ENCODE measurements at regions of chr3 and their contacts with region 1.

Region 1: GRCh38 chr3:45210308-45211041 is 15.6 kb downstream of the TMEM158 start:
- DNase-seq: peak; percentile 51 to 88 (median 81)
- ATAC-seq: peak; percentile 93
- H3K4me3 ChIP-seq: no peak overlapping the region
- H3K4me3 Mint-ChIP-seq: no peak overlapping the region
- H3K27ac ChIP-seq: no peak overlapping the region
- H3K27ac Mint-ChIP-seq: no peak overlapping the region
- H3K4me1 ChIP-seq: peaks cover 8% of the 10 kb centered on the region
- H3K4me1 Mint-ChIP-seq: peaks cover 9% of the 10 kb centered on the region
- H3K27me3 ChIP-seq: peaks cover 0 to 6% of the 10 kb centered on the region in 2 experiments
- H3K27me3 Mint-ChIP-seq: peaks cover 28% of the 10 kb centered on the region
- CTCF ChIP-seq: peak; percentile 56

Region 2: DNA sequence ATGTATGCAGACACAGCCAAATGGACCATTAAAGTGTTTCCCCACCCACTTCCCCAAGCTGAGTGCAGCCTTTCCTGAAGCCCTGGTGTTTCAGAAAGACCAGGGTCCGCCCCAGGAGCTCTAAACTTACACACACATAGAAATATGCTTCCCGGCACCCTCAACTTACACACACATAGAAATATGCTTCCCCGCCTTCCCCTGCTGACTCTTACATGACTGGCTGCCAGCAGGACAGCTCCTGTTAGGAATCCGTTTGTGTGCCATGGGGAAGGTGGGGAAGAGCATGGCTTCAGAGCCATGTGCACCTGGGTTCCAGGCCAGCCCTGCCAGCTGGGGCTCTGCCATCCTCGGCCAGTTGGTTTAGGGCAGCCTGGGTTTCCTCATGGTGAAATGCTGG is 180.8 kb before region 1 on chr3:
- CTCF ChIA-PET with region 1: interaction called, 597 read pairs
- POLR2A ChIA-PET with region 1: no interaction called
- intact Hi-C with region 1: no loop called
- DNase-seq: no peak
- ATAC-seq: no peak
- H3K4me3 ChIP-seq: no peak overlapping the region
- H3K4me3 Mint-ChIP-seq: no peak overlapping the region
- H3K27ac ChIP-seq: no peak overlapping the region
- H3K27ac Mint-ChIP-seq: no peak overlapping the region
- H3K4me1 ChIP-seq: peaks cover 3% of the 10 kb centered on the region
- H3K4me1 Mint-ChIP-seq: peaks cover 7% of the 10 kb centered on the region
- H3K27me3 ChIP-seq: no peaks in the 10 kb centered on the region
- H3K27me3 Mint-ChIP-seq: peaks cover 18% of the 10 kb centered on the region
- CTCF ChIP-seq: no peak

Region 3: GRCh38 chr3:45095916-45096526 is 114.5 kb before region 1 on chr3:
- CTCF ChIA-PET with region 1: interaction called, 12 read pairs
- POLR2A ChIA-PET with region 1: no interaction called
- intact Hi-C with region 1: no loop called
- DNase-seq: no peak
- ATAC-seq: no peak
- H3K4me3 ChIP-seq: no peak overlapping the region
- H3K4me3 Mint-ChIP-seq: no peak overlapping the region
- H3K27ac ChIP-seq: no peak overlapping the region
- H3K27ac Mint-ChIP-seq: no peak overlapping the region
- H3K4me1 ChIP-seq: no peaks in the 10 kb centered on the region
- H3K4me1 Mint-ChIP-seq: peaks cover 3% of the 10 kb centered on the region
- H3K27me3 ChIP-seq: peaks cover 0 to 3% of the 10 kb centered on the region in 2 experiments
- H3K27me3 Mint-ChIP-seq: peaks cover 48% of the 10 kb centered on the region
- CTCF ChIP-seq: no peak

Region 4: GRCh38 chr3:45178183-45179023 is 32.1 kb before region 1 on chr3:
- CTCF ChIA-PET with region 1: interaction called, 19 read pairs
- POLR2A ChIA-PET with region 1: no interaction called
- intact Hi-C with region 1: no loop called
- DNase-seq: no peak
- ATAC-seq: no peak
- H3K4me3 ChIP-seq: no peak overlapping the region
- H3K4me3 Mint-ChIP-seq: no peak overlapping the region
- H3K27ac ChIP-seq: no peak overlapping the region
- H3K27ac Mint-ChIP-seq: no peak overlapping the region
- H3K4me1 ChIP-seq: no peaks in the 10 kb centered on the region
- H3K4me1 Mint-ChIP-seq: no peaks in the 10 kb centered on the region
- H3K27me3 ChIP-seq: no peaks in the 10 kb centered on the region
- H3K27me3 Mint-ChIP-seq: peaks cover 12% of the 10 kb centered on the region
- CTCF ChIP-seq: no peak

Region 5: DNA sequence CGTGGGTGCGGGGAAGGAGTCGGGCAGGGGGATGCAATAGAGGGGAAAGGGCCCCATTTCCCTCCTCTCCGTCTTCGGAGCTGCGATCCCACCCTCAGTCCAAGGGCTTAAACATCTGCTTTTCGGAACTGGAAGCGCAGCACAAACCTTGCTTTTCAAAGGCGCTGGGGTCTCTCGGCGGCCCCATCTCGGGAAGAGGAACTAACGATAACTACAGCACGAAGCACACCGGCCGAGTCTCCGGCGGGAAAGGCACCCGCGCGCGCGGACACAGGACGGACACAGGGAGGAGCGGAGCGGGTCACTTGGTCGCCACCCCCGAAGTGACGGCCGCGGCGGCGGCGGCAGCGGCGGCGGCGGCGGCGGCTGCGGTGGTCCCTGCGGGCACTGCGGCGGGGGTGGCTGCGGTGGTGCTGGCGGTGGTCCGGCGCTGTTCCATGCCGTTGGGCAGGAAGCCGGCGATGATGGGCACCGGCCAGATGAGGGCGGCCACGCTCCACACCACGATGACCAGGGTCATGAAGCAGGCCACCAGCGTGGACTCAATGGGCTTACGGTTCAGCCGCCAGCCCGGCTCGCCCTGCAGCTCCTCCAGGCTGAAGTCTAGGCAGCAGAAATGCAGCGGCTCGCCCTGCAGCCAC is 14.5 kb after region 1 on chr3:
- CTCF ChIA-PET with region 1: interaction called, 23 read pairs
- POLR2A ChIA-PET with region 1: no interaction called
- intact Hi-C with region 1: no loop called
- DNase-seq: peak in 4 of 9 experiments; percentile 9 to 50 (median 24)
- ATAC-seq: no peak
- H3K4me3 ChIP-seq: no peak overlapping the region
- H3K4me3 Mint-ChIP-seq: peak overlapping the region; percentile 80
- H3K27ac ChIP-seq: no peak overlapping the region
- H3K27ac Mint-ChIP-seq: no peak overlapping the region
- H3K4me1 ChIP-seq: peaks cover 8% of the 10 kb centered on the region
- H3K4me1 Mint-ChIP-seq: peaks cover 11% of the 10 kb centered on the region
- H3K27me3 ChIP-seq: peaks cover 22 to 28% of the 10 kb centered on the region in 2 experiments
- H3K27me3 Mint-ChIP-seq: peaks cover 64% of the 10 kb centered on the region
- CTCF ChIP-seq: no peak

Region 6: DNA sequence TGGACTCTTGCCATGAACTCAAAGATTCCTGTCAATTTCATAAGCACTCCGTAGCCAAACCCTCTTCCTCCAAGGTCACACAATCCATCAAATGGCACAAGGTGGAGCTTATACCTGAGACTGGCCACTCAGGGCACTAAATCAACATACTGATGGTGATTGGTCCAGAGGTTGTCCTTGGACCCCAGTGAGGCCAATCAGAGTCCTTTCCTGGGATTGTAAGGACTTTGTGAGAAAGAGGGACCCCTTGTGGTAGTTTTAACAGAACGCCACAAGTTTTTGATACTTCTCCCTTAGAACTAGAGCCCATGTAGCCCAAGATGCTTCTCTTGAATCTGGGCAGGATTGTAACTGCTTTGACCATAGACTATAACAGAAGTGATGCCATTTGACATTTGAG is 133.5 kb after region 1 on chr3:
- CTCF ChIA-PET with region 1: no interaction called
- POLR2A ChIA-PET with region 1: no interaction called
- intact Hi-C with region 1: no loop called
- DNase-seq: peak in 2 of 9 experiments; percentile 11 to 15
- ATAC-seq: no peak
- H3K4me3 ChIP-seq: no peak overlapping the region
- H3K4me3 Mint-ChIP-seq: no peak overlapping the region
- H3K27ac ChIP-seq: no peak overlapping the region
- H3K27ac Mint-ChIP-seq: no peak overlapping the region
- H3K4me1 ChIP-seq: no peaks in the 10 kb centered on the region
- H3K4me1 Mint-ChIP-seq: no peaks in the 10 kb centered on the region
- H3K27me3 ChIP-seq: peaks cover 0 to 3% of the 10 kb centered on the region in 2 experiments
- H3K27me3 Mint-ChIP-seq: no peaks in the 10 kb centered on the region
- CTCF ChIP-seq: no peak

Region 7: GRCh38 chr3:46027736-46028397 is 817.4 kb after region 1 on chr3:
- CTCF ChIA-PET with region 1: no interaction called
- POLR2A ChIA-PET with region 1: no interaction called
- intact Hi-C with region 1: no loop called
- DNase-seq: no peak
- ATAC-seq: no peak
- H3K4me3 ChIP-seq: no peak overlapping the region
- H3K4me3 Mint-ChIP-seq: no peak overlapping the region
- H3K27ac ChIP-seq: no peak overlapping the region
- H3K27ac Mint-ChIP-seq: no peak overlapping the region
- H3K4me1 ChIP-seq: no peaks in the 10 kb centered on the region
- H3K4me1 Mint-ChIP-seq: no peaks in the 10 kb centered on the region
- H3K27me3 ChIP-seq: no peaks in the 10 kb centered on the region
- H3K27me3 Mint-ChIP-seq: no peaks in the 10 kb centered on the region
- CTCF ChIP-seq: no peak